B cell (primary cell): ENCODE measurements at regions of chr21 and their contacts with region 1.

Region 1: GRCh38 chr21:36141513-36141925 is 6.6 kb downstream of the CBR3 start:
- DNase-seq: peak; percentile 93
- ATAC-seq: peak; percentile 95
- H3K4me3 ChIP-seq: no peak overlapping the region
- H3K4me3 Mint-ChIP-seq: no peak overlapping the region
- H3K27ac ChIP-seq: peak overlapping the region in 1 of 2 donors; percentile 18
- H3K27ac Mint-ChIP-seq: no peak overlapping the region
- H3K4me1 ChIP-seq: peaks cover 19 to 29% of the 10 kb centered on the region in 2 donors
- H3K4me1 Mint-ChIP-seq: peaks cover 24% of the 10 kb centered on the region
- H3K27me3 ChIP-seq: no peaks in the 10 kb centered on the region
- H3K27me3 Mint-ChIP-seq: no peaks in the 10 kb centered on the region
- CTCF ChIP-seq: peak; percentile 93

Region 2: GRCh38 chr21:36079010-36079649 is 62.4 kb before region 1 on chr21:
- CTCF ChIA-PET with region 1: no interaction called
- POLR2A ChIA-PET with region 1: no interaction called
- intact Hi-C with region 1: no loop called
- DNase-seq: peak; percentile 61
- ATAC-seq: peak; percentile 79
- H3K4me3 ChIP-seq: peak overlapping the region in 1 of 5 experiments; percentile 20
- H3K4me3 Mint-ChIP-seq: peak overlapping the region; percentile 64
- H3K27ac ChIP-seq: peak overlapping the region; percentile 35 to 51
- H3K27ac Mint-ChIP-seq: peak overlapping the region; percentile 90
- H3K4me1 ChIP-seq: peaks cover 26 to 29% of the 10 kb centered on the region in 2 donors
- H3K4me1 Mint-ChIP-seq: peaks cover 37% of the 10 kb centered on the region
- H3K27me3 ChIP-seq: no peaks in the 10 kb centered on the region
- H3K27me3 Mint-ChIP-seq: no peaks in the 10 kb centered on the region
- CTCF ChIP-seq: no peak

Region 3: GRCh38 chr21:36178349-36178748 is 36.8 kb after region 1 on chr21:
- CTCF ChIA-PET with region 1: no interaction called
- POLR2A ChIA-PET with region 1: no interaction called
- intact Hi-C with region 1: no loop called
- DNase-seq: no peak
- ATAC-seq: no peak
- H3K4me3 ChIP-seq: no peak overlapping the region
- H3K4me3 Mint-ChIP-seq: no peak overlapping the region
- H3K27ac ChIP-seq: no peak overlapping the region
- H3K27ac Mint-ChIP-seq: no peak overlapping the region
- H3K4me1 ChIP-seq: peaks cover 23 to 33% of the 10 kb centered on the region in 2 donors
- H3K4me1 Mint-ChIP-seq: peaks cover 42% of the 10 kb centered on the region
- H3K27me3 ChIP-seq: no peaks in the 10 kb centered on the region
- H3K27me3 Mint-ChIP-seq: no peaks in the 10 kb centered on the region
- CTCF ChIP-seq: no peak

Region 4: GRCh38 chr21:36209626-36210171 is 68.2 kb after region 1 on chr21:
- CTCF ChIA-PET with region 1: interaction called, 39 read pairs
- POLR2A ChIA-PET with region 1: no interaction called
- intact Hi-C with region 1: loop called (anchors 1 kb)
- DNase-seq: peak; percentile 50
- ATAC-seq: peak; percentile 31
- H3K4me3 ChIP-seq: no peak overlapping the region
- H3K4me3 Mint-ChIP-seq: no peak overlapping the region
- H3K27ac ChIP-seq: no peak overlapping the region
- H3K27ac Mint-ChIP-seq: no peak overlapping the region
- H3K4me1 ChIP-seq: no peaks in the 10 kb centered on the region
- H3K4me1 Mint-ChIP-seq: no peaks in the 10 kb centered on the region
- H3K27me3 ChIP-seq: no peaks in the 10 kb centered on the region
- H3K27me3 Mint-ChIP-seq: no peaks in the 10 kb centered on the region
- CTCF ChIP-seq: peak; percentile 33